ENCODE measurements at regions of chr9 and their contacts with region 1.

Region 1: DNA sequence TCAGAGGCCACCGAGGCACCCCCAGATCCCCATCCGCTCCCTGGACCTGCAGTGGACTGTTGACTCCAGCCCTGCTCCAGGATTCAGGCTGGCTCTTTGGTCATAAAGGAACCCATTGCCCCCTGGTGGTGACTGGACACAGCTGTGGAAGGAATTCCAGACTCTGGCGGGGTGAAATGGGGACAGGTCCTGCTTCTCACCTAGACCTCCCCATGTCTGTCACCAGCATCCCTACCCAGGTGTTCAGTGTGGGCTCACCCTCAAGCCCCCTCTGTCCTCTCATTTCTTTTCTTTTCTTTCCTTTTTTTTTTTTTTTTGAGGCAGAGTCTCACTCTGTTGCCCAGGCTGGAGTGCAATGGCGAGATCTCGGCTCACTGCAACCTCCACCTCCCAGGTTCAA is 25.5 kb upstream of the STXBP1 start:
- DNase-seq: peak; percentile 87
- H3K4me3 ChIP-seq: no peak overlapping the region
- H3K27ac ChIP-seq: no peak overlapping the region
- H3K4me1 ChIP-seq: peaks cover 0 to 18% (median 2%) of the 10 kb centered on the region in 4 donors
- H3K27me3 ChIP-seq: no peaks in the 10 kb centered on the region
- CTCF ChIP-seq: peak; percentile 83 to 97

Region 2: GRCh38 chr9:127503947-127504782 is 82.4 kb before region 1 on chr9:
- intact Hi-C with region 1: loop called (anchors 2 kb)
- DNase-seq: peak; percentile 88 to 91
- H3K4me3 ChIP-seq: no peak overlapping the region
- H3K27ac ChIP-seq: peak overlapping the region; percentile 60 to 64
- H3K4me1 ChIP-seq: peaks cover 0 to 17% (median 6%) of the 10 kb centered on the region in 4 donors
- H3K27me3 ChIP-seq: no peaks in the 10 kb centered on the region
- CTCF ChIP-seq: peak; percentile 83 to 91

Region 3: DNA sequence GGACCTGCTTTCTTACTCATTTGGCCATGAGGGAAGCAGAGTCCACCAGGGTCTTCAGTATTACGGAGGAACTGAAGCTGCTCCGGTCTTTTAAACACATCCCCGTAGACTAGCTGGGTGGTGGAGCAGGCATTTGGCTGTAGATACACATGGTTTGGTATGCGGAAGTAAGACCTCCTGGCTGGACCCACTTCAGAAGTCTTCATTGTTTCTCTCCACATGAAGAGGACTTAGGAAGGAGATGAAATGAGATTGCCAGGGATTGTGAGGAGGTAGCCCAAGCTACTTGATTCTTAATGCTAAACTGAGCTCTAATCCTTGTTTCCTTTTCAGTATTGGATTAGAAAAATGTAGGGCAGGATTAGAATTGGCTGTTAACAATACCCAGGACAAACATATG is 58.4 kb after region 1 on chr9:
- intact Hi-C with region 1: no loop called
- DNase-seq: no peak
- H3K4me3 ChIP-seq: no peak overlapping the region
- H3K27ac ChIP-seq: no peak overlapping the region
- H3K4me1 ChIP-seq: no peaks in the 10 kb centered on the region
- H3K27me3 ChIP-seq: no peaks in the 10 kb centered on the region
- CTCF ChIP-seq: no peak

Region 4: GRCh38 chr9:127734747-127735529 is 148.4 kb after region 1 on chr9 and contains the start of gene TOR2A:
- intact Hi-C with region 1: loop called (anchors 2 kb)
- DNase-seq: peak; percentile 94 to 98
- H3K4me3 ChIP-seq: peak within 1 kb of the TSS; percentile 69 to 75
- H3K27ac ChIP-seq: peak within 1 kb of the TSS; percentile 93
- H3K4me1 ChIP-seq: peaks cover 0 to 13% (median 7%) of the 10 kb centered on the region in 4 donors
- H3K27me3 ChIP-seq: no peaks in the 10 kb centered on the region
- CTCF ChIP-seq: peak; percentile 92 to 99

Region 5: GRCh38 chr9:127869310-127870152 is 283.0 kb after region 1 on chr9:
- intact Hi-C with region 1: loop called (anchors 5 kb)
- DNase-seq: peak; percentile 90 to 93
- H3K4me3 ChIP-seq: no peak overlapping the region
- H3K27ac ChIP-seq: peak overlapping the region in 1 of 2 donors; percentile 20
- H3K4me1 ChIP-seq: peaks cover 0 to 17% (median 15%) of the 10 kb centered on the region in 4 donors
- H3K27me3 ChIP-seq: no peaks in the 10 kb centered on the region
- CTCF ChIP-seq: peak; percentile 82 to 95

Region 6: GRCh38 chr9:127927457-127927987 is 341.0 kb after region 1 on chr9:
- intact Hi-C with region 1: loop called (anchors 2 kb)
- DNase-seq: no peak
- H3K4me3 ChIP-seq: peak overlapping the region in 1 of 2 donors; percentile 10
- H3K27ac ChIP-seq: no peak overlapping the region
- H3K4me1 ChIP-seq: peaks cover 0 to 38% (median 32%) of the 10 kb centered on the region in 4 donors
- H3K27me3 ChIP-seq: peaks cover 0 to 52% of the 10 kb centered on the region in 2 donors
- CTCF ChIP-seq: no peak

Region 7: DNA sequence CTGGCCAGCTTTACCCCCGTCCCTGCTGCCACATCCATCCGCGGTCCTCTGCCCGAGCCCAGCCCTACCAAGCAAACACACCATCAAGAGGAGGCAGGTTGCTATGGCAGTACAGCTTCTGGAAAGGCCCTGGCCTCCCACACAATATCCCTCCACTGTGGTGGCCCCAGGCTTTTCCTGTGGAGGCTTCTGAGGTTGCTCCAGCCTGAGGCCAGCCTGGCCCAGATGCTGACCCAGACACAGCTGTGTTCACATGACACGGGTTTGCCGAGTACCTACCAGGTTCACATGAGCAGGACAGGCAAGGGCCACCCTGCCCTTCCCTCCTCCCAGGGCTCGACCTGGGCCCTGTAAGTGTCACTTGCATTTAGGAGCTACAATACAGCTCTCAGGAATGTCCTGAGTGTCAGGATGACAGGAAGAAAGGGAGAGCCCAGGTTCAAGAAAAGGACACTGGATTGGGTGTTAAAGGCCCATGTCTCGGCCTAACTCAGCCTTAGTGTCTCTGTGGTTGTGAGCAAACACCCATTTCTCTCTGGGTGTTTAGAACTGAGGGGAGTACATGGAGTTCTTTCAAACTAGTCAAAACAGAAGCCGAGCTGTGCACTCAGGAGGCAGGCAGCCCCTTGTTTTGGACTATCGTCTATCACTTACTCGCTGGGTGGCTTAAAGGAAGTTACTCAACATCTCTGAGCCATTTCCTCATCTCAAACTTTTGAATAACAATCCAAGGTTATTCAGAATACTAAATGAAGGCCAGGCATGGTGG is 440.4 kb after region 1 on chr9:
- intact Hi-C with region 1: loop called (anchors 10 kb)
- DNase-seq: no peak
- H3K4me3 ChIP-seq: no peak overlapping the region
- H3K27ac ChIP-seq: no peak overlapping the region
- H3K4me1 ChIP-seq: no peaks in the 10 kb centered on the region
- H3K27me3 ChIP-seq: no peaks in the 10 kb centered on the region
- CTCF ChIP-seq: no peak

Measured in tibial artery (tissue), 4 donors.